ENCODE measurements at regions of chr4 and their contacts with region 1.

Region 1: DNA sequence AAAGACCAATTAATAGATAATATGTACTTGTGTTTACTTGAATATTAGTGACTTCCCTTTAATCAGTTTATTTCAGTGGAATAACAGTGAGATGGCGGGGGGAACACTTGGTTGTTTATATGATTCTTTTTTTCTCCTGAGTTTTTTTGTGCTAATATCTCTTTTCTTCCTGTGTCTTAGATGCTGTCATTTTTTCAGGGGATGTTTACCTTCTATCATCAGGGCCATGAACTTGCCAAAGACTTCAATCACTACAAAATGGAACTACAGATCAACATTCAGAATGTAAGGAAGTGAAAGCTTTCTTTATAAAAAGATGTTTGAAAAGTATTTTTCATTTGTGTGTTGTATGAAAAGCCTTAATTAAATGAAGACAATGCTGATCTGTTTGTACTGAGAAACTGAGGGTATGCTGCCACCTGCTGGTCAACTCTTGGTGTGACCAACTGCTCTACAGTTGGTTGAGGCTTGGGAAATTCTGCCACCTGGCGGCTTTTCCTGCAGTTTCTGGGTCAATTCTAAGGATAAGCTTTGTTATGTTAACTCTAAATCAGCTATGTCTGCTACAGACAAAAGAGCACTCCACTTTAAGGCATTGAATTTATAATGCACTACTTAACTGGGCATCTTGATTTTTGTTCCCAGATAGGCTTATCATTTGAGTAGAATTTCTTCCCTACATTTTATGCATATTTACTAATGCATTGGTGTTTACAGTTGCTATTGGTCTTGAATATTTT is 134.8 kb downstream of the ARHGAP10 start:
- DNase-seq: peak; percentile 55
- H3K4me3 ChIP-seq: no peak overlapping the region
- CTCF ChIP-seq: peak; percentile 89

Region 2: DNA sequence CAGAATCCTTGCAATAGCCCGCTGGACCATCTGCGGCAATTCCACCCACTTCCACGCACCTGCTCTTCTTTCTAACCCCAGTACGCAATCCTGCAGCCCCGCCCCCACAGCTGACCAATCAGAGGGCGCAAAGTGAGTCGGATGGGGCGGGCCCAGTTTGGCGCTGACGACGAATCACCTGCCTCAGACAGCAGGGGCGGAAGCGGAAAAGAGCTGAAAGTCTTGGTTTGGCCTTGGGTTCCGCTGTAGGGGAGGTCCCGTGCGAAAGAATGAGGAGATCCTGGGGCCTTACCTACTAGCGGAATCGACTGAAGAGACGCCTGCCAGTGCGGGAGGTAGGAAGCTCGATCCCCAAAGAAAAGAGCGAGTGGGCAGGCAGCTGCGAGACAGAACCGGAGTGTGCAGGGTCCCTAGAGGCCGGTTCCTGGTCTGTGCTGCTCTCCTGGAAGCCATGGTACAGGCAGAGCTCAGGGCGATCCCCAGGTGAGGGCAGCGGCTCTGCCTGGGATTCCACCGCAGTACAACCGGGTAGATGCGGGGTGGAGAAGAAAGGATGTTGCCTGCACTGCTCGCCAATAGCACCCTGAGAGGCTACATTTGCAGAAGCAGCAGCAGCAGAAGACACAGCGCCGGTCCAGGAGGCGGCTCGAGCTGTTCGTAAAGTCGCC is 249.4 kb before region 1 on chr4 and contains the start of gene TMEM184C:
- CTCF ChIA-PET with region 1: interaction called, 32 read pairs
- POLR2A ChIA-PET with region 1: no interaction called
- DNase-seq: peak; percentile 53
- H3K4me3 ChIP-seq: peak within 1 kb of the TSS; percentile 91
- CTCF ChIP-seq: peak; percentile 10

Region 3: GRCh38 chr4:147683717-147684700 is 182.7 kb before region 1 on chr4 and contains the start of gene PRMT9:
- CTCF ChIA-PET with region 1: interaction called, 77 read pairs
- POLR2A ChIA-PET with region 1: interaction called, 3 read pairs
- DNase-seq: peak; percentile 63
- H3K4me3 ChIP-seq: peak within 1 kb of the TSS; percentile 88
- CTCF ChIP-seq: no peak

Region 4: DNA sequence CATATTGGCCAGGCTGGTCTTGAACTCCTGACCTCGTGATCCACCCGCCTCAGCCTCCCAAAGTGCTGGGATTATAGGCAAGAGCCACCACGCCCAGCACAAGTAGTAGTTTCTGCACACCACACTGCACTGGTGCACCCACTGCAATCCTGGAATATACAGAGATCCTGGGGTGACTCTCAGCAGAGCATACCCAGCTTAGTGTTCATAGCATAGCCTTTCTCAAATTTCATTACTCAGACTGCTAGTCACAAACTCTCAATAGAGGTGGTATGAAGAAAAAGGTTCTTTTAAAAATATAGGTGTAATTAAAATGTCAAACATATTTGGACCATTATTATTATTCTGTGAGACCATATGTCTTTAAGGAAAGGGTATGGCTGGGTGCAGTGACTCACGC is 141.0 kb before region 1 on chr4:
- CTCF ChIA-PET with region 1: interaction called, 78 read pairs
- POLR2A ChIA-PET with region 1: no interaction called
- DNase-seq: no peak
- H3K4me3 ChIP-seq: no peak overlapping the region
- CTCF ChIP-seq: no peak

Region 5: DNA sequence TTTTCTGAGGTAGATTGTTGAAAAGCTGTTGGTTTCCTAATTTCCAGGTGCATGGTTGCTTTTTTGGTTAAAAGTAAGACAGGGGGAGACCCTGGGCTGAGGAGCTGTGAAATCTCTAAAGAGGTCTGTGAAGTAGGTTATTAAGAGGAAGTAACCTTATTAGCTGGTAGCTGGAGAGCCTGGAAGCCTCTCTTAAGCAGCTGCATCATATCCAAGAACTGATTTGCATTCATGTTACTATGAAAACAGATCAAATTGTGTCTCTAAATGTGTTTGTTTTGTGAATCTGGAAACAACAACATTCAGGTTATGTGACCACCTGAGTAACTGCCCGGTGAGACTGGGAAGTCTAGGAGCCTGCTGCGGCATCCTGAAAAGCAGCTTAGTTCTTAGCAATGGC is 80.7 kb before region 1 on chr4:
- CTCF ChIA-PET with region 1: interaction called, 16 read pairs
- POLR2A ChIA-PET with region 1: no interaction called
- DNase-seq: no peak
- H3K4me3 ChIP-seq: no peak overlapping the region
- CTCF ChIP-seq: no peak

Region 6: GRCh38 chr4:147853706-147854105 is 13.0 kb before region 1 on chr4:
- CTCF ChIA-PET with region 1: interaction called, 101 read pairs
- POLR2A ChIA-PET with region 1: no interaction called
- DNase-seq: no peak
- H3K4me3 ChIP-seq: no peak overlapping the region
- CTCF ChIP-seq: no peak

Measured in AG04449 (cell line).